Ascending aorta (tissue), 2 donors: ENCODE measurements at regions of chr10 and their contacts with region 1.

Region 1: DNA sequence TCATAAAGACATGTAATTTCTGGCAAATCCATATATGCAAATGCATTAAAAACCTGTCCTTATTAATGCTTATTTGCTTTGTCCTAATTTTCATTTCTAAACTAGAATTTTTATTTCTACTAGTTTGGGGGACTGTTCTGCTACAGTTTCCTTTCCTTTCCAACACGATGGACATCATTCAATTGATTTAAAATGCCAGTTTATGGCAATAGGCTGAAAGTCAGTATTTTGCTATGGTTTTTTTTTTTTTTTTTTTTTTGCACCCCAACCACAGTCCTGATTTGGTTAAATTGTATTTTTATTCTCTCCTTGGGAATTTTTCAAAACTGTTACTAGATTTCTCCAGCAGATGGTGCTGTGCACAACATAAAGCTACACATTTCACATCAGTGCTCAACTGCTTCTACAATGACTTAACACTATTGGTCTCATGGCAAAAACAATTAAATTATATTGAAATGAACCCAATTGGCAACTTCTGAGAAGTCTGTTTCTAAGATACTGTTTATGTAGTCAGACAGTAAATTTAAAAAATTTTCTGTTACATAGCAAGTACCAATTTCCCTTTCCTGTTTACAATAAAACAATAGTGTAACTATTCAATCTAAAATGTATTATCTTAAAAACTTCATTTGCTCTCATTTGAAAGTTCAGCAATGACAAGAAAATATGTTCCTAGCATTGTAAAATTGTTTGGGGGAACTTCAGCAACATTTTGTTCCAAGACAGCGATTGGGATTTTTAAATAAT is 193.8 kb upstream of the CCDC6 start:
- DNase-seq: no peak
- H3K4me3 ChIP-seq: no peak overlapping the region
- H3K27ac ChIP-seq: no peak overlapping the region
- H3K4me1 ChIP-seq: peaks cover under 1 to 6% of the 10 kb centered on the region in 2 donors
- H3K27me3 ChIP-seq: no peaks in the 10 kb centered on the region
- CTCF ChIP-seq: peak; percentile 46 to 69 (median 63)

Region 2: DNA sequence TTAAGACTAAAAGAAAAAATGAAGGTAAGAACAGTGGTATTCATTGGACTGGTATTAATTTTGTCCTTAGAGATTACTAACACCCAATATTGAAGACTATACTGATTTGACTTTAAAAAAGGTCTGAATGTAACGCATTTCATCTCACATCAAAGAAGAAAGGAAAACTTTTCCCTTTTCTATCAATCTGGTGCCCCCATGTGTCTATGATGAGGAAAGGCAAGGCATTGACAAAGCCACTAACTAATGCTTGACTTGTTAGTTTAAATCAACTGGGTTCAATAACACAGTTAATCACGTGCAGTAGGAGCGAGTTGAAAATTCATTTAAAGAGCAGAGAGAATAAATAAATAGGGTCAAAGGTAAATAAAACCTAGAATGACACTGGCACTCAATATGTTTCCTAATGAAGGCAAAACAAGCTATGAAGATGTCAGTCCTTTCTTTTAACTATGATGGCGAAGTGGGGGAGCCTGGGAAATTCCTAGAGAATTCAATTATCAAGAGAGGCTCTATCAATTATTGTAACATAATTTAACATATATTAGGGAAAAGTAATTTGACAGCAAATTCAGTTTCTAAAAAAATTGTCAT is 108.6 kb after region 1 on chr10:
- intact Hi-C with region 1: loop called (anchors 1 kb)
- DNase-seq: no peak
- H3K4me3 ChIP-seq: no peak overlapping the region
- H3K27ac ChIP-seq: no peak overlapping the region
- H3K4me1 ChIP-seq: peaks cover 0 to 11% of the 10 kb centered on the region in 2 donors
- H3K27me3 ChIP-seq: no peaks in the 10 kb centered on the region
- CTCF ChIP-seq: peak; percentile 61 to 84 (median 77)

Region 3: GRCh38 chr10:60246382-60246781 is 146.2 kb after region 1 on chr10:
- intact Hi-C with region 1: no loop called
- DNase-seq: no peak
- H3K4me3 ChIP-seq: no peak overlapping the region
- H3K27ac ChIP-seq: no peak overlapping the region
- H3K4me1 ChIP-seq: no peaks in the 10 kb centered on the region
- H3K27me3 ChIP-seq: no peaks in the 10 kb centered on the region
- CTCF ChIP-seq: no peak

Region 4: DNA sequence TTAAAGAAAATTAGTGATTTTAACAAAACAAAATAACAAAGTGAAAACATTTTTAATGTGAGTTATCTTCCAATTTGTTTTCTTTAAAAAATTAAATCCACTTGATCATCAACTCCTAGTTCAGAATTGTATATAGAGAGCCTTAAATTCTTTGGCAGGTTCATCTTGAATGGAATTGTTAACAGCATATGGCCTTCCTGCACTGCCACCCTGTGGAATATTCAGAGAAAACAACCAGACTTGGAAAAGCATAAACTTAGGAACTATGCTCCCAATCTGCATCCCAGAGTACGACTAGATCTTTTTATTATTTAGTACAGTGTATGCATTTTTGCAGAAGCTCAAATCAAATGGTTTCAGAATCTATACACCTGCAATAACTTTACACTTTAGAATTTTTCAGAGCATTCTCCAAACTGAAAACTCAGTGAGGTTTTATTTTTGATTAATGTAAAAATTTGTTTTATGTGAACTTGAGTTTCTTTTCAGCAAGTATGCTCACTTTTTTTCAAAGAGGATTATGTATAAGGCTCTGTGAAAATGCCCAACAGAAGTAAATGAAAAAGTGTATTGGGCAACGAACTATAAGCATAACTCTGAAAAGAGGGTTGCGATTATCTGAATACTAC is 334.4 kb after region 1 on chr10:
- intact Hi-C with region 1: loop called (anchors 2 kb)
- DNase-seq: no peak
- H3K4me3 ChIP-seq: no peak overlapping the region
- H3K27ac ChIP-seq: no peak overlapping the region
- H3K4me1 ChIP-seq: peaks cover 0 to under 1% of the 10 kb centered on the region in 2 donors
- H3K27me3 ChIP-seq: no peaks in the 10 kb centered on the region
- CTCF ChIP-seq: peak; percentile 65 to 75 (median 70)

Region 5: GRCh38 chr10:60646966-60647796 is 547.0 kb after region 1 on chr10:
- intact Hi-C with region 1: loop called (anchors 5 kb)
- DNase-seq: no peak
- H3K4me3 ChIP-seq: no peak overlapping the region
- H3K27ac ChIP-seq: no peak overlapping the region
- H3K4me1 ChIP-seq: no peaks in the 10 kb centered on the region
- H3K27me3 ChIP-seq: no peaks in the 10 kb centered on the region
- CTCF ChIP-seq: peak; percentile 53 to 76 (median 65)